Aorta (tissue), 5 donors: ENCODE measurements at regions of chr1 and their contacts with region 1.

Region 1: DNA sequence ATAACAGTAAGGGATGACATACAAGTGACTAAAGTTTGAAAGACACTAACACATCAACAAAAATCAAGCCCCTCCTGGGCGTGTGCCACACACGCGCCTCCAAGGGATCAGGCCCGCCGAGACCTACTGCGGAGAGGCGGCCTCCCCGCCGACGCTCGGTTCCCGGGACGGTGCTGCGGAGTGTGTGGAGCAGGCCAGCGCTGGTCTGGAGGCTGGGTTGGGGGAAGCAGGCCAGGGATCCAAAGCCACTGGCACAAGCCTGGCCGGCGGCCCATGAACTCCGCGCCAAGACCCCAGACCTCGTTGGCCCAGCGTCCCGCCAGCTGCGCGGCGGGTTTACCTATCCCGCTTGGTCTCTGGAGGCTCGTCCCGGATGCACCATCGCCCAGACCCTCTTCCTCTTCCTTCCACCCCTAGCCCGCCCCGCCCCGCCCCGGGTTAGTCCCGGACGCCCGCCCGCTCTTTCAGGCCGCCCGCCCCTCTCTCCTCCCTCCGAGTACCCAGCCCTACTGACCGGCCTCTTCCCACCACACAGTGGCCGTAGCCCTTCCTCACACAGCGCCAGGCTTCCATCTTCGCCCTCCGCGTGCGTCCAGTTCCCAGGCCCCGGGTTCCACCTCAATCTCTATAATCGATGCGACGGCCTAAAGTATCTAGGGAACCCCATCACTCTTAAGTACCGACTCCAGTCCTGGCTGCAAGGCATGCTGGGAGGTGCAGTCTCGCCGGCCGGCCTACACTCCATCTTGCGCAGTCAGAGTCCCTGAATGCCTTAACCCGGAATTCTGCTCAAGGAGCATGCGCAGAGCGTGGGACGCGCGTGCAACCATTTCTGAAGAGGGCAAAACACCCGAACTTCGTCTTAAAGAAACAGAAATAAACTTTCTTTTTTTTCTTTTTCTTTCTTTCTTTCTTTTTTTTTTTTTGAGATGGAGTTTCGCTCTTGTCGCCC is at the start of gene ANGEL2:
- DNase-seq: peak; percentile 98
- ATAC-seq: peak; percentile 99
- H3K4me3 ChIP-seq: peak within 1 kb of the TSS; percentile 58 to 74
- H3K27ac ChIP-seq: peak within 1 kb of the TSS in 1 of 2 donors; percentile 74
- H3K4me1 ChIP-seq: peaks cover 0 to 2% of the 10 kb centered on the region in 2 donors
- H3K27me3 ChIP-seq: no peaks in the 10 kb centered on the region
- total RNA-seq, gene ANGEL2: 33.5 to 40.4 TPM

Region 2: DNA sequence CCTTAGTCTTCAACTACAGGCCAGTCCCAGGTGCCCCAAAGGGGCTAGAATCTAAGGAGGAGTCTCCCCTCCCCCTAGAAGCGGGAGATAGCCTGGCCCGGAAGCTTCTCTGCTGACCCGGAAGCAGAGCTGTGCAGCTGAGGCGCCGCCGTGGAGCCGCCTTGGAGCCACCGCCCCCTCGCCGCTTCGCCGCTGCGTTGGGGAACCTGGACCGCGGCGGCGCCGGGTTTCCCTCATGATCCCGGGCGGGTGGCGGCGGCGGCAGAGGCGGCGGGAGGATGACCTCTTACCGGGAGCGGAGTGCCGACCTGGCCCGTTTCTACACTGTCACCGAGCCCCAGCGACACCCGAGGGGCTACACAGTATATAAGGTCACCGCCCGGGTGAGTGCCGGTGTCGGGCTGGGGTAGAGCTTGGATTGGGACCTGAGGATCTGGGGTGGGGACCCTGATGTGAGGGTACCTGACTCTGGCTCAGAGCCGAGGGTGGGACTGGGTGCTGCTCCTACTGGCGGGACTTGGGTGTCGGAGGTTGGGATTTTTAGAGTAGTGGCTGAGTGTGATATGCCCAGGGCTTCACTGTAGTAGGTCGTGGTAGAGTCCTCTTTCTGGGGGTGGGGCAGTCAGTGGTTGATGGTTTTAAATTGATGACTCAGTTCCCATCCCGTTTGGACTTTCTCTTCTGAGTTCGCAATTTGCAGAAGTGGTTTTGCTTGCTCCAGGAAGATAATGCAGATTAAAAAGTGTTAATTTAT is 35.9 kb after region 1 on chr1 and contains the start of gene RPS6KC1:
- intact Hi-C with region 1: loop called in 1 of 2 experiments (anchors 5 kb)
- DNase-seq: peak; percentile 91 to 95
- ATAC-seq: peak; percentile 96
- H3K4me3 ChIP-seq: peak within 1 kb of the TSS; percentile 96 to 98
- H3K27ac ChIP-seq: peak within 1 kb of the TSS in 1 of 2 donors; percentile 58
- H3K4me1 ChIP-seq: no peaks in the 10 kb centered on the region
- H3K27me3 ChIP-seq: no peaks in the 10 kb centered on the region
- total RNA-seq, gene RPS6KC1: 24.3 to 26.7 TPM